ENCODE measurements at regions of chr6 and their contacts with region 1.

Region 1: DNA sequence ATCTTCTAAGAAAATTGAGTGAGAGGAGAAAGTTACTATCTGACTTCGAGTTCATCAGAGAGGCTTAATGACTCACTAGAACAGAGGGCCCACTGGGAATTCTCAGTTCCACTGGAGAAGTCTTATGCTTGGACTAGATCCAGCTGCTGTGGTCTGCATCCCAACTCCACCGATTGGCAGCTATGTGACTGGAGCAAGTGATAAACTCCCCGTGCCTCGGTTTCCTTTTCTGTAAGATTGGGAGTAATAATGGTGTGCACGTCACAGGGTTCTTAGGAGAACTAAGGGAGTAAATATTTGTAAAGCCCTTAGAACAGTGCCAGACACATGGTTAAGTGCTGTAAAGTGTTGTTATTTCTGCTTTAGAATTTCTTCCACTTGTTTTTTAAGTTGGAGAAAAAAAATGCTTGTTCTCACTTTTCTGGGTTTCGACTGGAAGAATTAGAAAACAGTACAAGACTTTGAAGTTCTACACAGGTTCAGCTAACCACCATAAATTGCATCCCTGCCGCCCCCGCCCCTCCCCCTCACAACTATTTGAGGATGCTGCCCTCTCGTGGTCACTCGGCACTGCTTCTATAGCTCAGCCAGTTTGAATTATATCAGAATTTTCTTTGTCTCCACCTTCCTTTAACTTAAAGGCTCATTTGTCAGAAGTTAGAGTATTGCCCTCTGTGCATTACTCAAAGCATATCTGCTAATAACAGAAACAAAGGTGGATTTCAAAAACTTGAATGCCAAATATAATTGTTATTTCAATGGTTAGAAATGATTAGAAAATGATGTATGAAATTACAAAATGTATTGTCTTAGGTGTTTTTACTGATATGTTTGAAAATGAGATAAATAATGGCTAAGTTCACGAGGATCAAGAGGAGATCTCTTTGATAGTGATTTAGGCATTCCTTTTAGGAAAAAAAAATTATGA is 95.0 kb upstream of the IFNGR1 start:
- DNase-seq: peak; percentile 75
- H3K4me3 ChIP-seq: peak overlapping the region in 1 of 4 donors; percentile 6
- H3K27ac ChIP-seq: no peak overlapping the region
- H3K4me1 ChIP-seq: peaks cover 0 to 13% (median 7%) of the 10 kb centered on the region in 4 donors
- H3K27me3 ChIP-seq: no peaks in the 10 kb centered on the region
- CTCF ChIP-seq: peak; percentile 76 to 85 (median 83)
- EP300 ChIP-seq: no peak
- POLR2A ChIP-seq: no peak

Region 2: GRCh38 chr6:136846046-136846445 is 468.1 kb before region 1 on chr6:
- in situ Hi-C with region 1: loop called in 1 of 4 experiments (anchors 25 kb)
- intact Hi-C with region 1: no loop called
- DNase-seq: peak; percentile 36
- H3K4me3 ChIP-seq: no peak overlapping the region
- H3K27ac ChIP-seq: no peak overlapping the region
- H3K4me1 ChIP-seq: no peaks in the 10 kb centered on the region
- H3K27me3 ChIP-seq: no peaks in the 10 kb centered on the region
- CTCF ChIP-seq: peak; percentile 59 to 77 (median 65)
- EP300 ChIP-seq: no peak
- POLR2A ChIP-seq: no peak

Region 3: DNA sequence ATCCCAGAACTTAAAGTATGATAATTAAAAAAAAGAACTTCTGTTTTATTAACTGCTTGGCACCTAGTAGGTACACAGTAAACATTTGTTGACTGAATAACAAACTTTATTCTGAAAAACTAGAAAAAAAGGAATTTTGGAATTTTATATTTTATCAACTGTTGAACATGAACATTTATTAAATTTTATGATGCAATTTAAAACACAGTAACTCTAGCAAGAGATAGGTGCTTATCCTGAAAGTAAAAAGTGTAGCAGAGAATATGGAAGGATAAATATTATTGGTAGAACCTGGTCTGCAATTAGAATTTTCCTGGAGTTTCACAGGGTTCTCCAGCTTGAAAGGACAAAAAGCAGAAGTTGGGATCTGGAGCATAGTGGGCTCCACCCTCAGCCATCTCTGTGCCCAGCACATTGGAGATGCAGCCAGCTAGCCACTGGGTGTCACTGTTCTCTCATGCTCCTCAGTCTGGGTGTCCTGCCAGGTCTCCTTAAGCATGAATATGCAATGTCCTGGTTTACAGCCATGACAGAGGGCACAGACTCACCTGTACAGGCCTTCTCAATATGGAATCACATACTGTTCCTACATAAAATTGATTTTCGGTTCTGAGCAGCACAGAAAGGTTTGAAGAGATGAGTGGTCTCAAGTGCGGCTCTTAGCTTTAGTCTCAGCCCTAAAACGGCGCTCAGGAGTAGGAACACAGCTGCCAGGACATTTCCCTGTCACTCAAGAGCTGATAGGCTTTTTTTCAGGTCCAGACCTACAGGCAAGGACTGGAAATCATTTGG is 237.7 kb before region 1 on chr6:
- in situ Hi-C with region 1: loop called in 2 of 4 experiments (anchors 5 to 25 kb)
- intact Hi-C with region 1: no loop called
- DNase-seq: peak; percentile 80
- H3K4me3 ChIP-seq: no peak overlapping the region
- H3K27ac ChIP-seq: no peak overlapping the region
- H3K4me1 ChIP-seq: no peaks in the 10 kb centered on the region
- H3K27me3 ChIP-seq: no peaks in the 10 kb centered on the region
- CTCF ChIP-seq: peak; percentile 57 to 75 (median 64)
- EP300 ChIP-seq: no peak
- POLR2A ChIP-seq: no peak

Region 4: GRCh38 chr6:137094411-137095008 is 219.7 kb before region 1 on chr6:
- in situ Hi-C with region 1: loop called in 2 of 4 experiments (anchors 10 to 25 kb)
- intact Hi-C with region 1: loop called (anchors 10 kb)
- DNase-seq: peak; percentile 56
- H3K4me3 ChIP-seq: no peak overlapping the region
- H3K27ac ChIP-seq: no peak overlapping the region
- H3K4me1 ChIP-seq: peaks cover 0 to 30% (median 8%) of the 10 kb centered on the region in 4 donors
- H3K27me3 ChIP-seq: no peaks in the 10 kb centered on the region
- CTCF ChIP-seq: peak; percentile 67 to 70 (median 69)
- EP300 ChIP-seq: no peak
- POLR2A ChIP-seq: no peak

Region 5: DNA sequence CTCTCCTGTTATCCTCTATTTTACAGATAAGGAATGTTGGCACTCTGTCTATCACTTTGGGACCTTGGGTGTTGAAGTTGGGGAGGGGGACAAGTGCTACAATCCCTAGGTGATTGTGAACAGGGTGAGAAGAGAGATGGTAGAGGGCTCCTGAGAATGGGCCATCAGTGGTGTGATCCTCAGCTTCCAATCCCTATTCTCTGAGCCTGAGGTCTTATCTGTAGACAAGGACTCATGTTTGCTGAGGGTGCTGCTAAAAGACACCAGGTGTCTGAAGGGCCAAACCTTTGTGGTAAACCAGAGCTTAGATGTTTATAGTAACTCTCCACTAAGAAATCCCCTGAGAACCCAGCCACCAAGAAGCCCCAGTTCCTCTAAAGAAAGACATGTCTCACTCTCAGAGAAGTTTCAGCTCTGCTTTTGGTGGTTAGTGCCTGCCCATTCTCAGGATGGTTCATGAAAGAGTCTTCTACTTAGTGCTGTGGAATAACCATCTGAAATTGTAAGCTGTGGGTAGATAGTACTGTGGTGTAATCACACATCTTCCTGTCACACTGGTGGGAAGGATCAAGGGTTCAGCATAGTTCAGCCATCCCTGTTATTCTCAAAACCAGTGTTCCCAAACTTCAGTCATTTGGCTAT is 211.2 kb before region 1 on chr6:
- in situ Hi-C with region 1: loop called in 3 of 4 experiments (anchors 10 to 25 kb)
- intact Hi-C with region 1: loop called (anchors 10 kb)
- DNase-seq: no peak
- H3K4me3 ChIP-seq: no peak overlapping the region
- H3K27ac ChIP-seq: no peak overlapping the region
- H3K4me1 ChIP-seq: no peaks in the 10 kb centered on the region
- H3K27me3 ChIP-seq: no peaks in the 10 kb centered on the region
- CTCF ChIP-seq: no peak
- EP300 ChIP-seq: no peak
- POLR2A ChIP-seq: no peak

Region 6: DNA sequence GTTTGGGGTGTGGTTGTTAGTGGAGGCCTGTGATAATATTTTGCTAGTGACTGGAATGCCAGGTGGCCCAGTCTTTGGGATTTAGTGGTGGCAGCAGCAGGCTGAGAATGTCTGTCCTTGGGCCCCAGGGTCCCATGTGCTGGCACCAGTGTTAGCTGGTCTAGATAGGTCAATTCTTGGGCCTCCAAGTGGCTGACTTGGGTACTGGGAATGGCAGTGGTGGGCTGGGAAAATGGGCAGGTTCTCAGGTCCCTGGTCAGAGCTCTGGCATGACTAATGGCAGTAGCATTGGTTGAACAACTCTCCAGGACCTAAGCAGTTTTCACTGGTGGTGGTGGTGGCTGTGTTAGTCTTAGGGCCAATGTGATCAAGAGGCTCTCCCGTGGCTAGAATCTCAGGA is 129.7 kb after region 1 on chr6:
- in situ Hi-C with region 1: no loop called
- intact Hi-C with region 1: no loop called
- DNase-seq: no peak
- H3K4me3 ChIP-seq: no peak overlapping the region
- H3K27ac ChIP-seq: no peak overlapping the region
- H3K4me1 ChIP-seq: no peaks in the 10 kb centered on the region
- H3K27me3 ChIP-seq: no peaks in the 10 kb centered on the region
- CTCF ChIP-seq: no peak
- EP300 ChIP-seq: no peak
- POLR2A ChIP-seq: no peak

Measured in transverse colon (tissue), 4 donors.